K562 (cell line): ENCODE measurements at regions of chr1 and their contacts with region 1.

Region 1: GRCh38 chr1:29682919-29683295 is 446.6 kb downstream of the PTPRU start:
- DNase-seq: no peak
- ATAC-seq: no peak
- H3K4me3 ChIP-seq: no peak overlapping the region
- H3K27ac ChIP-seq: no peak overlapping the region
- H3K4me1 ChIP-seq: peaks cover 0 to 3% of the 10 kb centered on the region in 2 experiments; a peak in 1 of 5 replicates
- H3K27me3 ChIP-seq: peaks cover 0 to 32% of the 10 kb centered on the region in 2 experiments; a peak in 3 of 5 replicates
- CTCF ChIP-seq: no peak
- EP300 ChIP-seq: no peak
- POLR2A ChIP-seq: no peak
- RAD21 ChIP-seq: no peak

Region 2: DNA sequence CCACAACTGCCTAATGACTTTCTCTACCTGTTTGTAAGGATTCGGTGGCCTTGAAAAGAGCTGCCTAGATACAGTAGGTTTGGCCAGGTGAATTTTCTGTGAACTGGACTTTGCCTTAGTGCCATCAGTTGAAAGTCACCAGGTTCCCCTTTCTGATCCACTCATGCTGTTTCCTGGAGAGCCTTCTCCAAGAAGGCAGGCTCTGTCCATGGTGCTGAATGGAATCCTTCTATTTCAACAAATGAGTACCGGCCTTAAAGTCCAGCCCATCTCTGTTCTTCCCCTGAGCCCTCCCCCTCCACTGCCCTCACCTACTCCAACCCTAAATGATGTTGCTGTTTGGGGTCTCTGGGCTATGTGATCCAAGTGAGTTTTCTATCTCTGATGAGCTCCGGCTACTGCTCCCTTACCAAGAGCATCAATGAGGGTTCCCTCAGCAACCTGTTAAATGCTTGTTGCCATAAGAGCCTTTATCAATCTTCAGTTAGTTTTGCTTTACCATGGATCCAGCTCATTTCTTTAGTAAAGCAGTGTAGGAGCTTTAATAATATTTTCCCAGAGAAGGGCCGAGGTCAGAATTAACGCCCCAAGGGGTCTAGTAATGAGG is 53.8 kb after region 1 on chr1:
- CTCF ChIA-PET with region 1: no interaction called
- POLR2A ChIA-PET with region 1: no interaction called
- in situ Hi-C with region 1: no loop called
- intact Hi-C with region 1: no loop called
- DNase-seq: peak; percentile 50 to 70 (median 56)
- ATAC-seq: peak; percentile 44; the same call in 1 of the 3 replicates
- H3K4me3 ChIP-seq: no peak overlapping the region
- H3K27ac ChIP-seq: no peak overlapping the region
- H3K4me1 ChIP-seq: no peaks in the 10 kb centered on the region
- H3K27me3 ChIP-seq: no peaks in the 10 kb centered on the region
- CTCF ChIP-seq: no peak
- EP300 ChIP-seq: no peak
- POLR2A ChIP-seq: no peak
- RAD21 ChIP-seq: no peak

Region 3: DNA sequence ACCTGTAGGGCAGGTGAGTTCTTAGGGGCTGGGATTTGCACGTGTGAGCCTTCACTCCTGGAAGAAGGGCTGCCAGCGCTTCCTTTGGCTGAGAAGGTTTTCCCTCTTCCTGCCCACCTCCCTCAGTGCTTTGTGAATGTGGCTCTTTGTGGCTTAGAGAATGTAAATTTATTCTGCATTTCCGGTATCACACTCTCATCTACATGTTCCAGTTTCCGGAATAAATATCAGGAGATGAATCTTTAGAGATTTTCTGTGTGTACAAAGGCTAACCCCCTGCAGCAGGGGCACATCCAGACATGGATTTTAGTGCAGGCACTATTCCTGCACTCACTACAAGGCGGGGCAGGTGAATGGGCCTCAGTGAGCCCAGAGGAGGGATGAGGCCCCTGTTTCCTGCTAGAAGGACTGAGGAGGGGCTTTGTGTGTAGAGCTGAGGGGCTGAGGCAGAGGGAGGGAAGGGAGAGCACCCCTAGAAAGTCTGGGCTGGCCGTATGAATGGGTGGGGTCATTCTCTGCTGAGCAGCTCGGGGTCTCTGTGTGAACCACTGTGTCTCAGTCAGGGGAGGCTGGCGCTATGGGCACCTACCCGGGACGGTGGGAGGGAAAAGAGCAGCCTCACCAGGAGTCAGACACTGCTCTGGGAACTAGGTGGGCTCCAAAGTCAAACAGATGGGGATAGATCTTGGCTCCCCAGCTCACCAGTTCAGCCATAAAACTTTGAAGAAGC is 833.0 kb after region 1 on chr1:
- CTCF ChIA-PET with region 1: no interaction called
- POLR2A ChIA-PET with region 1: no interaction called
- in situ Hi-C with region 1: loop called (anchors 5 kb)
- intact Hi-C with region 1: no loop called
- DNase-seq: no peak
- ATAC-seq: no peak
- H3K4me3 ChIP-seq: no peak overlapping the region
- H3K27ac ChIP-seq: no peak overlapping the region
- H3K4me1 ChIP-seq: no peaks in the 10 kb centered on the region
- H3K27me3 ChIP-seq: peaks cover 0 to 22% of the 10 kb centered on the region in 2 experiments; a peak in 2 of 5 replicates
- CTCF ChIP-seq: no peak
- EP300 ChIP-seq: no peak
- POLR2A ChIP-seq: no peak
- RAD21 ChIP-seq: no peak